AG04450 (cell line): ENCODE measurements at regions of chr11 and their contacts with region 1.

Region 1: GRCh38 chr11:76799066-76799804 is 16.1 kb downstream of the TSKU start:
- DNase-seq: no peak
- H3K4me3 ChIP-seq: no peak overlapping the region
- H3K27ac ChIP-seq: no peak overlapping the region
- H3K27me3 ChIP-seq: no peaks in the 10 kb centered on the region
- CTCF ChIP-seq: peak; percentile 74

Region 2: DNA sequence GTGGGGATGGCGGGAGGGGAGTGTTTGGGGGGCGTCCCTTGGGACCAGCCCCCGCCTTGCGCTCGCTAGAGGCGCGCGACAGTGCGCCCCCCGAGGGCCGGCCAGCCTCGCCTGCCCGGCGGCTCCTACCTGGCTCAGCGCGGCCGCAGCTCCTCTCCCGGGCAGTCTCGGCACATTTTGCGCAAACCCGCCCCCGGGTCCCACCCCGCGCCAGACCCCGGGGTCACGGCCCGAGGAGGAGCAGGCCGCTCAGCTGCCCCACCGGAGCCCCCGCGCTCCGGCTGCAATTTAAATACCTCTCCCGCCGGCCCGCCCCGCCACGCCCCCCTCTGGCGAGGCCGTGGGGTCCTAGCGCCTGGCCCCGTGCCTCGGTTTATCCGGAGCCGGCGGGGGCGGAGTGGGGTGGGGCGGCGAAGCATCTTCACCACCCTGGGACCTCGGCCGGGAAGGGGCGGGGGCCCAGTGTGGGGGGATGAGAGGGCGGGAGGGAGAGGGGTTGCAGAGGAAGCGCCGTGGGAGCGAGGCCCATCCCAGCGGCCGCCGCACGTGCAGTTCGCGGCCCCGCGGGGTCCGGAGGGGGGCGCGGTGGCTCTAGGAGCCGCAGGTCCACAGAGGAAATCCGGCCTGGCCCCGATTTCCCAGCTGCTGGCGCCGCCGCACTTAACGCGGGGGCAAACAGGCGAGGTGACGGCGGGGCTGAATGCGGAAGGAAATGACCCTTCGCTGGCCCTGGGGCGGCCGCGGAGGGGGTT is 128.6 kb before region 1 on chr11 and contains the start of gene LRRC32:
- CTCF ChIA-PET with region 1: no interaction called
- POLR2A ChIA-PET with region 1: no interaction called
- DNase-seq: no peak
- H3K4me3 ChIP-seq: peak within 1 kb of the TSS; percentile 63
- H3K27ac ChIP-seq: peak within 1 kb of the TSS; percentile 47
- H3K27me3 ChIP-seq: no peaks in the 10 kb centered on the region
- CTCF ChIP-seq: no peak
- polyA plus RNA-seq, gene LRRC32: 10.9 and 14.2 TPM in 2 replicates

Region 3: GRCh38 chr11:76782526-76783293 is 16.5 kb before region 1 on chr11:
- CTCF ChIA-PET with region 1: interaction called, 4 read pairs
- POLR2A ChIA-PET with region 1: interaction called, 21 read pairs
- DNase-seq: peak; percentile 97
- H3K4me3 ChIP-seq: peak overlapping the region; percentile 69
- H3K27ac ChIP-seq: peak overlapping the region; percentile 93
- H3K27me3 ChIP-seq: no peaks in the 10 kb centered on the region
- CTCF ChIP-seq: no peak

Region 4: GRCh38 chr11:76903329-76903728 is 104.1 kb after region 1 on chr11:
- CTCF ChIA-PET with region 1: no interaction called
- POLR2A ChIA-PET with region 1: no interaction called
- DNase-seq: no peak
- H3K4me3 ChIP-seq: no peak overlapping the region
- H3K27ac ChIP-seq: no peak overlapping the region
- H3K27me3 ChIP-seq: no peaks in the 10 kb centered on the region
- CTCF ChIP-seq: no peak